ENCODE measurements at regions of chr9 and their contacts with region 1.

Region 1: GRCh38 chr9:73173557-73174329 is 22.1 kb downstream of the ANXA1 start:
- DNase-seq: no peak
- ATAC-seq: no peak
- H3K4me3 ChIP-seq: no peak overlapping the region
- H3K27ac ChIP-seq: no peak overlapping the region
- H3K4me1 ChIP-seq: no peaks in the 10 kb centered on the region
- H3K27me3 ChIP-seq: no peaks in the 10 kb centered on the region
- CTCF ChIP-seq: no peak
- POLR2A ChIP-seq: peak; percentile 13; the same call in 1 of the 2 replicates
- RAD21 ChIP-seq: no peak

Region 2: GRCh38 chr9:73125651-73126050 is 48.1 kb before region 1 on chr9:
- CTCF ChIA-PET with region 1: no interaction called
- POLR2A ChIA-PET with region 1: interaction called, 12 read pairs
- dilution Hi-C with region 1: no loop called
- in situ Hi-C with region 1: no loop called
- intact Hi-C with region 1: no loop called
- DNase-seq: peak; percentile 70
- ATAC-seq: no peak
- H3K4me3 ChIP-seq: no peak overlapping the region
- H3K27ac ChIP-seq: no peak overlapping the region
- H3K4me1 ChIP-seq: no peaks in the 10 kb centered on the region
- H3K27me3 ChIP-seq: no peaks in the 10 kb centered on the region
- CTCF ChIP-seq: no peak
- POLR2A ChIP-seq: no peak
- RAD21 ChIP-seq: no peak

Region 3: GRCh38 chr9:73437758-73438157 is 264.0 kb after region 1 on chr9:
- CTCF ChIA-PET with region 1: no interaction called
- POLR2A ChIA-PET with region 1: no interaction called
- dilution Hi-C with region 1: no loop called
- in situ Hi-C with region 1: no loop called
- intact Hi-C with region 1: no loop called
- DNase-seq: no peak
- ATAC-seq: no peak
- H3K4me3 ChIP-seq: no peak overlapping the region
- H3K27ac ChIP-seq: no peak overlapping the region
- H3K4me1 ChIP-seq: no peaks in the 10 kb centered on the region
- H3K27me3 ChIP-seq: no peaks in the 10 kb centered on the region
- CTCF ChIP-seq: no peak
- POLR2A ChIP-seq: no peak
- RAD21 ChIP-seq: no peak

Measured in IMR-90 (cell line).